Endothelial cell of umbilical vein (primary cell): ENCODE measurements at regions of chr6 and their contacts with region 1.

Region 1: GRCh38 chr6:5046430-5046829 is 38.7 kb upstream of the PPP1R3G start:
- DNase-seq: no peak
- H3K4me3 ChIP-seq: no peak overlapping the region
- H3K27ac ChIP-seq: no peak overlapping the region
- H3K4me1 ChIP-seq: no peaks in the 10 kb centered on the region
- H3K27me3 ChIP-seq: no peaks in the 10 kb centered on the region
- CTCF ChIP-seq: no peak
- POLR2A ChIP-seq: no peak

Region 2: GRCh38 chr6:5058254-5058653 is 11.8 kb after region 1 on chr6:
- CTCF ChIA-PET with region 1: interaction called, 10 read pairs
- POLR2A ChIA-PET with region 1: no interaction called
- dilution Hi-C with region 1: no loop called
- intact Hi-C with region 1: no loop called
- DNase-seq: no peak
- H3K4me3 ChIP-seq: no peak overlapping the region
- H3K27ac ChIP-seq: no peak overlapping the region
- H3K4me1 ChIP-seq: peaks cover 17% of the 10 kb centered on the region
- H3K27me3 ChIP-seq: no peaks in the 10 kb centered on the region
- CTCF ChIP-seq: no peak
- POLR2A ChIP-seq: no peak